Mucosa of descending colon (tissue), 3 donors: ENCODE measurements at regions of chr6 and their contacts with region 1.

Region 1: DNA sequence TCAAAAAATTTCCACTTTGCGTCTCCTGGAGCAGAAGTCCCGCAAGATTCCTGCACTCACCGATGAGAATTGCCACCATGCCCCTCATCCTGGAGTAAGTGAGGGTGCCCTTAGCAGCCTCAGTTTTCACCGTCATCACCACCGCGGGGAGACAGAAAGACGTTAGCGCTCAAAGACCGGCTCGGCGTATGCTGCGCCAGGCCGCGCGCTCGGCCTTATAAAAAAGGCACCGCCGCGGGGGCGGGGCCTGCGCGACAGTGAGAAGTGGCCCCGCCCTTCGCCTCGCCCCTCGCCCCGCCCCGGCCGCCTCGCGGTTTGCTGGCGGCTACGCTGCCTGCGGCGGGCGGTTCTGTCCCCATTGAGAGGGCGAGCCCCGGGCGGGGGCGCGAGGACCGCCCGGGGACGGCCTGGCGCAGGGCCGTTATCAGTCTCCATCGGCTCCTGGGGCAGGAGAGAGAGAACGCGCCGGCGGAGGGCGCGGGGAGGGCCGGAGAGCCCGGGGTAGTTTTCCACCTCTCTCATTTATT is 122.3 kb upstream of the SLC2A12 start:
- DNase-seq: peak; percentile 95 to 97 (median 96)
- ATAC-seq: peak; percentile 87
- H3K4me3 ChIP-seq: peak overlapping the region; percentile 53
- H3K4me1 ChIP-seq: peaks cover 7% of the 10 kb centered on the region
- CTCF ChIP-seq: no peak

Region 2: DNA sequence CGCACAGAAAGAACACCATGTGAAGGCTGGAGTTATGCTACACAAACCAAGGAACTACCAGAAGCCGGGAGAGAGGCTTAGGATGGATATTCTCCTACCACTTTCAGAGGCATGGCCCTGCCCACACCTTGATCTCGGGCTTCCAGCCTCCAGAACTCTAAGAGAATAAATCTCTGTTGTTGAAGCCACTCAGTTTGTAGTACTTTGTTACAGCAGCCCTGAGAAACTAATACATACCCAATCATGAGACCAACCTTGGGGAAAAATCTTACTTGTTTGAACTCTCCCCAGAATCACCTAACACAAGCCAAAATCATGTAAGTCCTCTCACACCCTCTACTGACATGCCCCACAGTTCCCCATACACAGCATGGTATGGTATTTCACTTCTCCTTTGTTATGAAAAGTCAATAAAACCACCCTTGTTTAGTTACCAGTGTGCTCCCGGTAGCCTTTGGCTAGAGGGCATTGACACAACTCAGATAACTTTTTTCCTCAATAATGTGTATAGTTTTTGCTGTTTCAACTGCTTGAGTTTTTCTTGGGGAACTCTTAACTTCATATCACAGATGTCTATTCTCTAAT is 81.6 kb before region 1 on chr6:
- intact Hi-C with region 1: no loop called
- DNase-seq: no peak
- ATAC-seq: peak; percentile 60
- H3K4me3 ChIP-seq: no peak overlapping the region
- H3K4me1 ChIP-seq: no peaks in the 10 kb centered on the region
- CTCF ChIP-seq: no peak

Region 3: GRCh38 chr6:134640975-134641429 is 466.3 kb after region 1 on chr6:
- intact Hi-C with region 1: loop called (anchors 5 to 10 kb)
- DNase-seq: peak; percentile 52 to 84 (median 67)
- ATAC-seq: peak; percentile 78
- H3K4me3 ChIP-seq: no peak overlapping the region
- H3K4me1 ChIP-seq: peaks cover 21% of the 10 kb centered on the region
- CTCF ChIP-seq: peak; percentile 91

Region 4: GRCh38 chr6:134822920-134823709 is 648.4 kb after region 1 on chr6:
- intact Hi-C with region 1: loop called (anchors 5 to 10 kb)
- DNase-seq: peak in 1 of 3 donors; percentile 67
- ATAC-seq: peak; percentile 94
- H3K4me3 ChIP-seq: no peak overlapping the region
- H3K4me1 ChIP-seq: no peaks in the 10 kb centered on the region
- CTCF ChIP-seq: peak; percentile 37

Region 5: DNA sequence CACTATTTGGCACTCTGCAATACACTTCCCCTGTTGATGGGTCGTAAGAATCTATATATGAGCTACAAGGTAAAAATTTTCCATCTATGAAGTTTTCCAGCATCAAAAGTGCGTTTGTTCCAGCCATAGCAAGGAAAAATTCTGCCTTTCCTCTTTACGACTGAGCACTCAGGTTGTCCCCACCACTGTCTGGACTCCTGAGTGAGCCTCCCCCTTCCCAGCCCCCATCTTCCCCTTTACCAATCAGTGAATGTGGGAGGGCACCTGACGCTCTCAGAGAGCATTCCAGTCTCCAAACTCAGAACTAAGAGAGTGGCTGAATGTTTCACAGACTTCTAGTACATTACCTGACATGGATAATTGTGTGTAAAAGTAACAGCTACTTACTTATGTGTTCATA is 775.2 kb after region 1 on chr6 and contains the start of gene ALDH8A1:
- intact Hi-C with region 1: loop called in 1 of 2 experiments (anchors 10 kb)
- DNase-seq: no peak
- ATAC-seq: no peak
- H3K4me3 ChIP-seq: no peak within 1 kb of the TSS
- H3K4me1 ChIP-seq: no peaks in the 10 kb centered on the region
- CTCF ChIP-seq: no peak
- total RNA-seq, gene ALDH8A1: 0.48 to 2.3 (median 0.75) TPM